MCF 10A (cell line): ENCODE measurements at regions of chr1 and their contacts with region 1.

Region 1: DNA sequence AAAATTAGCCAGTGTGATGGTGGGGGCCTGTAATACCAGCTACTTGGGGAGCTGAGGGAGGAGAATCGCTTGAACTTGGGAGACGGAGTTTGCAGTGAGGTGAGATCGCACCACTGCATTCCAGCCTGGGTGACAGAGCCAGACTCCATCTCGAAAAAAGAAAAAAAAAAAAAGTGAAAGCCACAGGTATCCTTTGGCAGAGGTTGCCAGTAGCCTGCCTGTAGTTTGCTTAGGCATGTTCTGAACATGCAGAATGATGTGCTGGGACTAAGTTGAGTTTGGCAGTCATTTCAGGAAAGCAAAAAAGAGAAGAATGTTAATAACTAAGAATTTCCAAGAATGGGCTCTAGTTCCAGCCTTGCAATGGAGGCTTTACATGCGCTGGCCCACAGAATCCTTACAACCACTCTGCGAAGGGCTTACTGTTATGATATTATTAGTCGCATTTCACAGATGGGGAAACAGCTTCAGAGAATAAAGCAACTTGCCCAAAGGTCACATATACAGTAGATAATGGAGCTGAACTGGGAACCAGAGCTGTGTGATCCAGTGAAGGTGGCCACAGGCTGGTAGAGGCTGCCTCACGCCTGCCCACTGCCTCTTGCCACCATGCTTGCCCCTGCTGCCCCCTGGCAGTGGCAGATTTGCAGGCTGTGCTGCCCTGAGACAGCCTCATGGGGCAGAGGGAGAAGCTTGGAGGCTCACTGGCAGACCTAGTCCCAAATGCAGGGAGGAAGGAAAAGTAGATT is 66.5 kb upstream of the LYST start:
- DNase-seq: peak; percentile 67
- H3K4me3 Mint-ChIP-seq: peak overlapping the region; percentile 18
- H3K27ac Mint-ChIP-seq: peak overlapping the region; percentile 52
- H3K4me1 Mint-ChIP-seq: peaks cover 51% of the 10 kb centered on the region
- H3K27me3 Mint-ChIP-seq: no peaks in the 10 kb centered on the region
- CTCF ChIP-seq: no peak

Region 2: GRCh38 chr1:235720544-235720943 is 212.6 kb before region 1 on chr1:
- CTCF ChIA-PET with region 1: no interaction called
- POLR2A ChIA-PET with region 1: no interaction called
- intact Hi-C with region 1: no loop called
- DNase-seq: no peak
- H3K4me3 Mint-ChIP-seq: no peak overlapping the region
- H3K27ac Mint-ChIP-seq: no peak overlapping the region
- H3K4me1 Mint-ChIP-seq: peaks cover 6% of the 10 kb centered on the region
- H3K27me3 Mint-ChIP-seq: no peaks in the 10 kb centered on the region
- CTCF ChIP-seq: no peak

Region 3: DNA sequence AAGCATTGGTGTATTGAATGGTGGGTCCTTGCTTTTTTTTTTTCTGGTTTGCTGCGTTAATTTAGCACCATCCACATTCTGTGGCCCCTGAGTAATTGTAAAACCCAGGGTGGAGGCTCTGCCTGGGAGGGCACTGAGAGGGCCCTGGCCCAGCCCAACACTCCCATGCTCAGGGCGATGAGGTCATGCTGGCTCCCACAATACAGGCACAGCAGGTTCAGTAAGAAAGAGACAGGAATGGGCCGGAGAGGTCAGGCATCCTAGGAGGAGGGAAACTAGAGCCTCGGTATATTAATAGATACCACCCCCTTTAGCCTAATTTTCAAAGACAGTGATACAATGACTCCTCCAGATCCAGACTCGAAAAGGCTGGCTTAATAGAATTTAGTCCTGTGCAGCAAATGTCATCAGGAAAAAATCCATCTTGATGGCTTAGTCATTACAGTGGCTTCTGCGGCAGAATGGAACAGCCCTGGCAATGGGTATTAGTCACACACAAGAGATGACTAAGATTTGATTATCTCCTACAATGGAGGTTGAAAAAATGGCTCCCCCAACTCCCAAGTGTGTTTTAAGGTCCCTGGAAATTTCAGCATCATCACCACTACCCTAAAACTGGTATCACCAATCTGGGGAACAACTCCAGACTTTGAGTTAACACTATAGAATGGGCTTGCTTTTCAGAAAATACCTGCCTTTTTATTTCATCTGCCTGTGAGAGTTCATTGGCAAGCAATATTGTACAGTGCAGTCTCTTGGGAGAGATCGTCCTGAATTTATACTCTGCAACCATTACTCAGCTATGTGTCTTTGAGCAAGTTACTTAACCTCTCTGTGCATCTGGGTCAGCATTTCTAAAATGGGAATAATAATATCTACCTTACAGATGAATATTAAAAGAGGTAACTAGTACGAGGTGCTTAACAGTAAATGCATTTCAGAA is 22.6 kb before region 1 on chr1:
- CTCF ChIA-PET with region 1: interaction called, 112 read pairs
- POLR2A ChIA-PET with region 1: interaction called, 308 read pairs
- intact Hi-C with region 1: no loop called
- DNase-seq: peak; percentile 97
- H3K4me3 Mint-ChIP-seq: peak overlapping the region; percentile 22
- H3K27ac Mint-ChIP-seq: peak overlapping the region; percentile 99
- H3K4me1 Mint-ChIP-seq: peaks cover 55% of the 10 kb centered on the region
- H3K27me3 Mint-ChIP-seq: no peaks in the 10 kb centered on the region
- CTCF ChIP-seq: no peak

Region 4: GRCh38 chr1:235946571-235946981 is 13.4 kb after region 1 on chr1:
- CTCF ChIA-PET with region 1: interaction called, 98 read pairs
- POLR2A ChIA-PET with region 1: interaction called, 81 read pairs
- intact Hi-C with region 1: no loop called
- DNase-seq: peak; percentile 77
- H3K4me3 Mint-ChIP-seq: no peak overlapping the region
- H3K27ac Mint-ChIP-seq: no peak overlapping the region
- H3K4me1 Mint-ChIP-seq: peaks cover 47% of the 10 kb centered on the region
- H3K27me3 Mint-ChIP-seq: no peaks in the 10 kb centered on the region
- CTCF ChIP-seq: peak; percentile 75

Region 5: GRCh38 chr1:235954306-235955283 is 21.4 kb after region 1 on chr1:
- CTCF ChIA-PET with region 1: interaction called, 9 read pairs
- POLR2A ChIA-PET with region 1: interaction called, 61 read pairs
- intact Hi-C with region 1: no loop called
- DNase-seq: no peak
- H3K4me3 Mint-ChIP-seq: no peak overlapping the region
- H3K27ac Mint-ChIP-seq: peak overlapping the region; percentile 28
- H3K4me1 Mint-ChIP-seq: peaks cover 9% of the 10 kb centered on the region
- H3K27me3 Mint-ChIP-seq: no peaks in the 10 kb centered on the region
- CTCF ChIP-seq: no peak

Region 6: DNA sequence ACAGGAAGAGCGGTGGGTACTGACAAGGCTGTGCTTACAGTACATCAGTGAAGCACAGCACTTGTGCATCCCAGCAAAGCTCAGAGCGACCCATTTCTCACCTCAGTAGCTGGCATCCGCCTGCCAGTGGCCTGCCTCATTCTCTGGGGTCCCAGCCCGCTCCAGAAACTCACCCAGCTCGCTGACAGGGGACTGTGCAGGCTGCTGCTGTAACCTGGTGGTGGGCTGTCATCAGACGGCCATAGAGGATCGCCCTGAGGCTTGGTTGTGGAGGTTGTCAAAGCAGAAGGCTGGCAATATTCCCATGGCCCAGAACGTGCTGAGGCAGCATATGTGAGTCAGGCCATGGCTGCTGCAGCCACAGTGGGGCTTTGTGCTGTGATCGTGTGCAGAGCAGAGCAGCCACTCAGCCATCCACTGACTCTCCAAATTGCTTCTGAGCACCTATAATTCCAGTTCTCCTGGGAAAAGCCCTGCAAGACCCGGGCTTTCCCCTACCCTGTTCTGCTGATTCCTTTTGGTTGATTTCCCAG is 195.5 kb after region 1 on chr1:
- CTCF ChIA-PET with region 1: no interaction called
- POLR2A ChIA-PET with region 1: no interaction called
- intact Hi-C with region 1: no loop called
- DNase-seq: no peak
- H3K4me3 Mint-ChIP-seq: no peak overlapping the region
- H3K27ac Mint-ChIP-seq: no peak overlapping the region
- H3K4me1 Mint-ChIP-seq: no peaks in the 10 kb centered on the region
- H3K27me3 Mint-ChIP-seq: peaks cover 7% of the 10 kb centered on the region
- CTCF ChIP-seq: no peak